B cell (primary cell): ENCODE measurements at regions of chr16 and their contacts with region 1.

Region 1: GRCh38 chr16:17578921-17579874 is 108.4 kb upstream of the XYLT1 start:
- DNase-seq: peak; percentile 76
- ATAC-seq: peak; percentile 61
- H3K4me3 ChIP-seq: no peak overlapping the region
- H3K4me3 Mint-ChIP-seq: no peak overlapping the region
- H3K27ac ChIP-seq: no peak overlapping the region
- H3K27ac Mint-ChIP-seq: no peak overlapping the region
- H3K4me1 ChIP-seq: peaks cover 0 to 3% of the 10 kb centered on the region in 2 donors
- H3K4me1 Mint-ChIP-seq: peaks cover 4% of the 10 kb centered on the region
- H3K27me3 ChIP-seq: peaks cover 0 to 4% (median 0%) of the 10 kb centered on the region in 4 experiments
- H3K27me3 Mint-ChIP-seq: no peaks in the 10 kb centered on the region
- CTCF ChIP-seq: peak; percentile 89

Region 2: DNA sequence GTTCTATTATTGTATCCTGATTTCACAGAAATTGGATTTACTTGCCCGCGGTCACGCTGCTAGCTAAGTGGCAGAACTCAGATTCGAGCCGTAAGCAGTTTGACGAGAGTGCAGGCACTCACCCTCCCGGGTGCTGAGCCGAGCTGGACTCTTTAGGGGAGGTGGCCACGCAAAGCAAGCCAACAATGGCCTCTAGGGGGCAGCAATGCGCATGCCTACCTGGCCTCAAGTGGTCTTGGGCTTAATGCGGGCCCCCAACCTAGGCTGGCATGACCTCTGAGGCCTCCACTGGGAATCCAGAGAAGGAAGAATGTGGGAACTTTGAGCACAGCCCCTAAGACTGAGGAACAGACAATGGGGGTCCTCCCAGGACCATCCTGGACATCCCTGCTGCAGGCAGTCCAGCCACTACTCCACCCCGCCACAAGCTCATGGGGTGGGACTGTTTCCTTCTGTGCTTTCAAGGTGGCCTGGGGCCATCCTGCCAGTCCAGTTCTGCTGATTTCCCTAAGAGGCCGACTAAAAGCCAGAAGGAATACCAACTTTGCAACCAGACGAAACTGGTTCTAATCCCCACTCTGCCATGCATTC is 384.9 kb before region 1 on chr16:
- CTCF ChIA-PET with region 1: interaction called, 12 read pairs
- POLR2A ChIA-PET with region 1: no interaction called
- intact Hi-C with region 1: loop called (anchors 1 kb)
- DNase-seq: peak; percentile 67
- ATAC-seq: peak; percentile 51
- H3K4me3 ChIP-seq: no peak overlapping the region
- H3K4me3 Mint-ChIP-seq: no peak overlapping the region
- H3K27ac ChIP-seq: no peak overlapping the region
- H3K27ac Mint-ChIP-seq: peak overlapping the region; percentile 15
- H3K4me1 ChIP-seq: peaks cover 0 to 3% of the 10 kb centered on the region in 2 donors
- H3K4me1 Mint-ChIP-seq: no peaks in the 10 kb centered on the region
- H3K27me3 ChIP-seq: no peaks in the 10 kb centered on the region
- H3K27me3 Mint-ChIP-seq: no peaks in the 10 kb centered on the region
- CTCF ChIP-seq: peak; percentile 76

Region 3: DNA sequence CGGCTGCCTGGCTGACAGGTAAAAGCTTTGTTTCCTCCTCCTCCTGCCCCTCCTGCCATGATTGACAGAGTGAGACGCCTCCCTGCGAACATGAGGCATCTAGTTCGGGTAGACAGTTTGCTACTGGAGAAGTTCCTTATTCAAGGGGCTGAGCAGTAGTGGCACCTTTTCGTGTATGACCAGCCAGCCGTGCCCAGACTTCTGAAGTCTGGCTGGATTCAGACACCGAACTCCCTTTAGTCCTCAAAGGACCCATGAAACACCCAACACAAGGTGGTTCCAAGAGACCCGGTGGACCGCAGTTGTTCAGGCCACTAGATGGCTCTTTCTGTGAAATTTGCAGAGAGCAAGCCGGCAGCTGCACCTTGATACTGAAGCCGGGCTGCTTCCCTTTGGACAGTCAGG is 301.2 kb before region 1 on chr16:
- CTCF ChIA-PET with region 1: interaction called, 15 read pairs
- POLR2A ChIA-PET with region 1: no interaction called
- intact Hi-C with region 1: loop called (anchors 1 kb)
- DNase-seq: peak; percentile 69
- ATAC-seq: peak; percentile 60
- H3K4me3 ChIP-seq: peak overlapping the region in 1 of 5 experiments; percentile 20
- H3K4me3 Mint-ChIP-seq: peak overlapping the region; percentile 35
- H3K27ac ChIP-seq: no peak overlapping the region
- H3K27ac Mint-ChIP-seq: no peak overlapping the region
- H3K4me1 ChIP-seq: peaks cover 59 to 60% of the 10 kb centered on the region in 2 donors
- H3K4me1 Mint-ChIP-seq: peaks cover 77% of the 10 kb centered on the region
- H3K27me3 ChIP-seq: no peaks in the 10 kb centered on the region
- H3K27me3 Mint-ChIP-seq: no peaks in the 10 kb centered on the region
- CTCF ChIP-seq: peak; percentile 53

Region 4: DNA sequence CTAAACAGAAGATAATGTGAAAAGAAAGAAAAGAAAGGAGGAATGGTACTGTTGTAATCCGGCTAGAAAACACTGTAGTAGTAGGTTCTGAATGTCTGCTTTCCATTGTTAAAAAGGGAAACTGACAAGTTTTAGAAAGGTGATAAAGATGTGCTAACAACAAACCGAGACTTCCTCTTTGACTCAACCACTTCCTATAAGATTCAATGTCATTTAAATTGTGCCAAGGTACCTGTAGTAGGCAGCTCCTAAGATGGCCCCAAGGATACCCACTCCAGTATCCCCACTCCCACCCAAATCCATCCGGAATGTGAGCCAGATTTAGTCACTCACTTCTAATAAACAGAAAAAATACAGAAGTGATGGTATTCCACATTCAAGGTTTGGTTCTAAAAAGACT is 139.6 kb before region 1 on chr16:
- CTCF ChIA-PET with region 1: no interaction called
- POLR2A ChIA-PET with region 1: no interaction called
- intact Hi-C with region 1: no loop called
- DNase-seq: peak; percentile 48
- ATAC-seq: peak; percentile 43
- H3K4me3 ChIP-seq: peak overlapping the region in 1 of 5 experiments; percentile 2
- H3K4me3 Mint-ChIP-seq: peak overlapping the region; percentile 40
- H3K27ac ChIP-seq: peak overlapping the region in 1 of 2 donors; percentile 8
- H3K27ac Mint-ChIP-seq: peak overlapping the region; percentile 34
- H3K4me1 ChIP-seq: peaks cover 37 to 44% of the 10 kb centered on the region in 2 donors
- H3K4me1 Mint-ChIP-seq: peaks cover 42% of the 10 kb centered on the region
- H3K27me3 ChIP-seq: no peaks in the 10 kb centered on the region
- H3K27me3 Mint-ChIP-seq: no peaks in the 10 kb centered on the region
- CTCF ChIP-seq: no peak

Region 5: GRCh38 chr16:17467923-17468540 is 111.2 kb before region 1 on chr16:
- CTCF ChIA-PET with region 1: interaction called, 18 read pairs
- POLR2A ChIA-PET with region 1: no interaction called
- intact Hi-C with region 1: no loop called
- DNase-seq: peak; percentile 58
- ATAC-seq: peak; percentile 28
- H3K4me3 ChIP-seq: peak overlapping the region in 1 of 5 experiments; percentile 17
- H3K4me3 Mint-ChIP-seq: peak overlapping the region; percentile 93
- H3K27ac ChIP-seq: no peak overlapping the region
- H3K27ac Mint-ChIP-seq: no peak overlapping the region
- H3K4me1 ChIP-seq: peaks cover 42 to 46% of the 10 kb centered on the region in 2 donors
- H3K4me1 Mint-ChIP-seq: peaks cover 56% of the 10 kb centered on the region
- H3K27me3 ChIP-seq: no peaks in the 10 kb centered on the region
- H3K27me3 Mint-ChIP-seq: no peaks in the 10 kb centered on the region
- CTCF ChIP-seq: peak; percentile 12

Region 6: GRCh38 chr16:17556276-17557052 is 22.7 kb before region 1 on chr16:
- CTCF ChIA-PET with region 1: interaction called, 19 read pairs
- POLR2A ChIA-PET with region 1: no interaction called
- intact Hi-C with region 1: no loop called
- DNase-seq: no peak
- ATAC-seq: no peak
- H3K4me3 ChIP-seq: no peak overlapping the region
- H3K4me3 Mint-ChIP-seq: no peak overlapping the region
- H3K27ac ChIP-seq: no peak overlapping the region
- H3K27ac Mint-ChIP-seq: no peak overlapping the region
- H3K4me1 ChIP-seq: no peaks in the 10 kb centered on the region
- H3K4me1 Mint-ChIP-seq: no peaks in the 10 kb centered on the region
- H3K27me3 ChIP-seq: peaks cover 0 to 8% (median 0%) of the 10 kb centered on the region in 4 experiments
- H3K27me3 Mint-ChIP-seq: peaks cover 41% of the 10 kb centered on the region
- CTCF ChIP-seq: peak; percentile 49

Region 7: DNA sequence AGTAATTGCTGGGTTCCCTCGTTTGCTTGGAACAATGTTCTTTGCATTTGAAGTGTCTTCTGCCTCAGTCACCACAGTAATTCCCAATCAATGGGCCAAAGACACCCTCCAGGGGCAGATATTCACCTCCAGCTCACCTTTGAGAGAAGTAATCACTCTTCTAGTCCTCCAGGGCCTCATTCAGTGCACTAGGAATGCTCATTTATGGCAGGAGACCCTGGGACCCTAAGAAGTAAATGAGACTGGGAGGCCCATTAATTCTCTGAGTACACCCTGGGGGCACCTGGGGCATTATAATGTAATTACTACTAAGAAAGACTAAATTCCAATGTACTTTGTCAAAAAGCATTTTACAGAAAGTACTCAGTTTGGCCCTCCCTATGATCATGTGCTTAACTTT is 49.8 kb after region 1 on chr16:
- CTCF ChIA-PET with region 1: no interaction called
- POLR2A ChIA-PET with region 1: no interaction called
- intact Hi-C with region 1: no loop called
- DNase-seq: no peak
- ATAC-seq: no peak
- H3K4me3 ChIP-seq: no peak overlapping the region
- H3K4me3 Mint-ChIP-seq: no peak overlapping the region
- H3K27ac ChIP-seq: no peak overlapping the region
- H3K27ac Mint-ChIP-seq: no peak overlapping the region
- H3K4me1 ChIP-seq: no peaks in the 10 kb centered on the region
- H3K4me1 Mint-ChIP-seq: no peaks in the 10 kb centered on the region
- H3K27me3 ChIP-seq: no peaks in the 10 kb centered on the region
- H3K27me3 Mint-ChIP-seq: peaks cover 24% of the 10 kb centered on the region
- CTCF ChIP-seq: no peak